Colonic mucosa (tissue), 4 donors: ENCODE measurements at regions of chr1 and their contacts with region 1.

Region 1: GRCh38 chr1:225845571-225846259 is 35.8 kb downstream of the EPHX1 start:
- DNase-seq: peak; percentile 69
- H3K4me3 ChIP-seq: no peak overlapping the region
- H3K27ac ChIP-seq: no peak overlapping the region
- H3K4me1 ChIP-seq: peaks cover 8% of the 10 kb centered on the region
- H3K27me3 ChIP-seq: no peaks in the 10 kb centered on the region
- CTCF ChIP-seq: peak; percentile 39

Region 2: DNA sequence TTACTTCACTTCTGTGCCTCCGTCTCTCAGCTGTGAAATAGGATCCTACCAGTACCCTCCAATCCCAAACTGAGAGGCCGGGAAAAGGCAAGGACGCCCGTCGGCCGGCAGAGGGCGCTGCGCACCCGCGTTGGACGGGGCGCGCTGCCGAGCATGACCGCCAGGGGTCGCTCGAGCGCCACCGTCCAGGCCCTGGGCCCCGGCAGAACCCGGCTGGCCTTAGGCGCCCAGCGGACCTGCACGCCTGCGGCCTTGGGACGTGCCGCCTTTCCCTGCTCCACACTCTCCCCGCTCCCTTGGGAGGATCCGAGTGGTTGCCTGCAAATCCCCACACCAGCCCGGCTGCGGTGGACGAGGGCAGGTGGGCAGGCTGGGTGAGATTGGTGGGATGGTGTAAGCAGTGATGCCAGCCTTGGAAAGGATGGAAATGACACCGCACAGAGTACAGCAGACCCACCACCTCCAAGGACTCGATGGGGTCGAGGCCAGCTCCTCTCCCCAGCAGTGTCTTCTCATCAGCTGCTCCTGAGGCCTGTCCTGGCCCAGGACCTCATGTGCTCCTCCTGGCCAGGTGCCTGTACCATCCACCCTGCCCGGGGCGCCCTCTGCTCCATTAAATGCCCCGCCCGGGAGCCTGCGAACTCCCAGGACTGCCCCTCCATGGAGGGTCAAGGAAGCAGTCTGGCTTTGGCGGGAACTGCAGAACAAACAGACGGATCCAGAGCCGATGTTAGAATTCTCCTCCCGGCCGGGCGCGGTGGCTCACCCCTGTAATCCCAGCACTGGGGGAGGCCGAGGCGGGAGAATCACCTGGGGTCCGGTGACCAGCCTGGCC is 370.5 kb before region 1 on chr1:
- intact Hi-C with region 1: loop called (anchors 2 kb)
- DNase-seq: peak; percentile 58
- H3K4me3 ChIP-seq: no peak overlapping the region
- H3K27ac ChIP-seq: no peak overlapping the region
- H3K4me1 ChIP-seq: no peaks in the 10 kb centered on the region
- H3K27me3 ChIP-seq: no peaks in the 10 kb centered on the region
- CTCF ChIP-seq: peak; percentile 100

Region 3: DNA sequence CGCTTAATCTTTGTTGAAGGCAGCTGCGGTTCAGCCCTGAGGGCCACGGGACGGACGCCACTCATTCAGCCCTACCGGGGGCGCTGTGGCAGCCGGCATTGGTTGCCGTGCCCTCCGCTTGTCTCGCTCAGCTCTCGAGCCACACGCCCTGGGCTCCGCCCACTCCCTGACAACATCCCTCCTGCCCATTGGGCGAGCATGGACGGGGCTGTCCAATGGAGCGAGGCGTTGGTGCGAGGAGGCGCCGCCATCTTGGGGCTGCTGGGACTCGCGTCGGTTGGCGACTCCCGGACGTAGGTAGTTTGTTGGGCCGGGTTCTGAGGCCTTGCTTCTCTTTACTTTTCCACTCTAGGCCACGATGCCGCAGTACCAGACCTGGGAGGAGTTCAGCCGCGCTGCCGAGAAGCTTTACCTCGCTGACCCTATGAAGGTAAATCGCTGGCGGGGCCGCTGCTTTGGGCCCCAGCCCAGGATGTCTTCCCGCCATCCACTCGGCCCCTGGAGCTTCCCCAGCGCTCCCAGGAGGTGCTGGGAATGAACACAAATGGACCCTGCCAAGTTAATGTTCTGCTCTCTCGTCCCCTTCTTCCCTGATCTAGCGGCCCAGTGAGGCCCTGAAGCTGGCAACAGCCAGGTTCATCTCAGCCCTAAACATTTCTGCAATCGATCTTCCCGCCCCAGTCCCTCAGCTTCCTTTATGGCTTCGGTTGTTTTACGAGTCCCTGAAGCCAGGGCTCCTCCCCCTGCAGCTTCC is 68.0 kb before region 1 on chr1 and contains the start of gene SRP9:
- intact Hi-C with region 1: loop called (anchors 5 kb)
- DNase-seq: peak; percentile 100
- H3K4me3 ChIP-seq: peak within 1 kb of the TSS; percentile 62
- H3K27ac ChIP-seq: peak within 1 kb of the TSS; percentile 94
- H3K4me1 ChIP-seq: no peaks in the 10 kb centered on the region
- H3K27me3 ChIP-seq: no peaks in the 10 kb centered on the region
- CTCF ChIP-seq: peak; percentile 86
- total RNA-seq, gene SRP9: 233 to 264 TPM

Region 4: GRCh38 chr1:225911191-225912130 is 65.7 kb after region 1 on chr1:
- intact Hi-C with region 1: loop called (anchors 5 kb)
- DNase-seq: peak; percentile 71
- H3K4me3 ChIP-seq: no peak overlapping the region
- H3K27ac ChIP-seq: no peak overlapping the region
- H3K4me1 ChIP-seq: peaks cover 7% of the 10 kb centered on the region
- H3K27me3 ChIP-seq: no peaks in the 10 kb centered on the region
- CTCF ChIP-seq: peak; percentile 97

Region 5: GRCh38 chr1:225977937-225978748 is 132.4 kb after region 1 on chr1:
- intact Hi-C with region 1: loop called (anchors 10 kb)
- DNase-seq: no peak
- H3K4me3 ChIP-seq: no peak overlapping the region
- H3K27ac ChIP-seq: no peak overlapping the region
- H3K4me1 ChIP-seq: peaks cover 5% of the 10 kb centered on the region
- H3K27me3 ChIP-seq: no peaks in the 10 kb centered on the region
- CTCF ChIP-seq: no peak

Region 6: GRCh38 chr1:225990705-225991464 is 145.2 kb after region 1 on chr1:
- intact Hi-C with region 1: no loop called
- DNase-seq: no peak
- H3K4me3 ChIP-seq: no peak overlapping the region
- H3K27ac ChIP-seq: no peak overlapping the region
- H3K4me1 ChIP-seq: no peaks in the 10 kb centered on the region
- H3K27me3 ChIP-seq: no peaks in the 10 kb centered on the region
- CTCF ChIP-seq: no peak